Right ventricle myocardium inferior (tissue), 1 donor: ENCODE measurements at regions of chr6 and their contacts with region 1.

Region 1: GRCh38 chr6:32127717-32128592 is at the start of gene ATF6B:
- DNase-seq: peak; percentile 98
- ATAC-seq: peak; percentile 96
- total RNA-seq, gene ATF6B: 24.4 TPM

Region 2: GRCh38 chr6:32108094-32108627 is 19.8 kb before region 1 on chr6:
- intact Hi-C with region 1: no loop called
- DNase-seq: peak; percentile 85
- ATAC-seq: peak; percentile 59

Region 3: DNA sequence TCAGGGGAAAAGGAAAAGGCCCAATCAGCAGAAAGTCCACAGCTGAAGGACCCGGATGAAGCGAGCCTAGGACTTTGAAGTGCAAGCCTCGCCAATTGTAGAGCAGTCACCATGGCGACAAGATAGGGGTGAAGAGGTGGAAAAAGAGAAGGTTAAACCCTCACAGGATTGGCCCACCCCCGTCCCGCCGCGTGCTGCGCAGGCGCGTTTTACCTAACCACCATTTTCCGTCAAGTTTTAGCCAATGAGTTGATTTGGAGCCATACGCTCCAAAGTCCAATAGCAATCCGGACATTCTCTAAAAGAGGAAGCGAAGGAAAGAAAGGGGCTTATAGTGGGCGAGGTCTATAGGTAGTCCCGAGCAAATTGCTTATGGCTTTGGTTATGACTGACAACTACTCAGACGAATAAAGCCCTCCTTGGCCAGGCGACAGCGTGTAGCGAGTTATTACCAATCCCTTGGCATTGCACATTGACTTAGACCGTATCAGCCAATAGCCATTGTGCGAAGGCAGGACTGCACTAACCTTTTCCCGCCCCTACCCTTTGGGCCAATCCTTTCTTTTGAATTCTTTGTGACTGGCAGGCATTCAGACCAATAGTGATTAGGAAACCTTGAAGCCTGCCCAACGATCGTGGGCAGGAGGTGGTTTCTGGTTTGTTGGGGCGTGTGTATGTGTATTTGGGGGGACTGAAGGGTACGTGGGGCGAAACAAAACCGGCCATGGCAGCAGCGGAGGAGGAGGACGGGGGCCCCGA is 50.0 kb after region 1 on chr6 and contains the start of gene RNF5:
- intact Hi-C with region 1: loop called (anchors 2 kb)
- DNase-seq: peak; percentile 96
- ATAC-seq: peak; percentile 88
- total RNA-seq, gene RNF5: 97.5 TPM